ENCODE measurements at regions of chr3 and their contacts with region 1.

Region 1: GRCh38 chr3:149086232-149086988 is at the start of gene HLTF:
- DNase-seq: peak; percentile 92
- ATAC-seq: peak; percentile 99
- H3K4me3 ChIP-seq: peak within 1 kb of the TSS; percentile 71 to 81 (median 81)
- H3K27ac ChIP-seq: peak within 1 kb of the TSS; percentile 49
- H3K4me1 ChIP-seq: peaks cover 20% of the 10 kb centered on the region
- H3K27me3 ChIP-seq: no peaks in the 10 kb centered on the region; a peak in 2 of 5 replicates
- CTCF ChIP-seq: no peak
- EP300 ChIP-seq: no peak
- POLR2A ChIP-seq: peak; percentile 40 to 75; a peak in 3 of 4 replicates
- RAD21 ChIP-seq: 0 out of 2 replicates have a peak, but pooled peaks have one; percentile 16
- total RNA-seq, gene HLTF: 22.9 and 39.8 TPM in 2 replicates

Region 2: DNA sequence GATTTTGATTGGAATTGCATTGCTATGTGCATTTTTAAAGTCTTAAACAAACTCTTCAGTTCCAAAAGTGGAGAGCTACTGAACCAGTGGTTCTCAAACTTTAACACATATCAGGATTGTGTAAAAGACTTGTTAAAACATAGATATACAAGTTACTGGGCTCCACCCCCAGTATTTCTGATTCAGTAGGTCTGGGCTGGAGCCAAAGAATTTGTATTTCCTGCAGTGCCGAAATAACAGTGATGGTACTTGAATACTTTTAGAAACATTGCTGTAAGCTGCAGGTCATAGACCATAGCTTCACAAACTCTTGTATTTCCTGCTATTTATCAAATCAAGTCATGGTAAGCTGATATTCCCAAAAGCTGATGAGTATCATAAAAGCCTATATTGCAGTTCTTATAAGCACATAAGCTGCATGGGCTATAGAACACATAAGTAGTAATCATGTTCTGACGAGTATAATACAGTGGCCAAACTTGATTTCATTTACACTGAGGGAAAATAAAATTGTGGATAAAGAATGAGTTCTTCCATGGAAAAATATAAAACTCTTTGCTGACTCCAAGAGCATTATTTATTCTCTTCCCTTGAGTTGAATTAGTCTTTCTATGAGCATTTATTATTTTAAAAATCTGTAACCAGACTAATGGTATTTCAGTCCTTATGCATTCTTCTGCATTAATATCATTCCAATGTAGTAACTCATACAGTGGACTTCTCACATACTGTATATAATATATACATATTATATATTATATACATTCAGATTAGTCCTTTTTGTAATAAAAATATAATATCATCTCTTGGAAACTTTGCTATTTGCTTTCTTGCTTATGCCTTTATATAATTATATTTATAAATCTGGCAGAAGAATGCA is 939.2 kb before region 1 on chr3:
- CTCF ChIA-PET with region 1: no interaction called
- POLR2A ChIA-PET with region 1: no interaction called
- in situ Hi-C with region 1: no loop called
- intact Hi-C with region 1: loop called (anchors 5 kb)
- DNase-seq: no peak
- ATAC-seq: no peak
- H3K4me3 ChIP-seq: no peak overlapping the region
- H3K27ac ChIP-seq: no peak overlapping the region
- H3K4me1 ChIP-seq: no peaks in the 10 kb centered on the region
- H3K27me3 ChIP-seq: no peaks in the 10 kb centered on the region
- CTCF ChIP-seq: no peak
- EP300 ChIP-seq: no peak
- POLR2A ChIP-seq: no peak
- RAD21 ChIP-seq: no peak

Region 3: GRCh38 chr3:148748283-148748682 is 338.1 kb before region 1 on chr3:
- CTCF ChIA-PET with region 1: no interaction called
- POLR2A ChIA-PET with region 1: no interaction called
- in situ Hi-C with region 1: no loop called
- intact Hi-C with region 1: no loop called
- DNase-seq: no peak
- ATAC-seq: no peak
- H3K4me3 ChIP-seq: no peak overlapping the region
- H3K27ac ChIP-seq: no peak overlapping the region
- H3K4me1 ChIP-seq: no peaks in the 10 kb centered on the region
- H3K27me3 ChIP-seq: no peaks in the 10 kb centered on the region
- CTCF ChIP-seq: no peak
- EP300 ChIP-seq: no peak
- POLR2A ChIP-seq: no peak
- RAD21 ChIP-seq: no peak

Region 4: DNA sequence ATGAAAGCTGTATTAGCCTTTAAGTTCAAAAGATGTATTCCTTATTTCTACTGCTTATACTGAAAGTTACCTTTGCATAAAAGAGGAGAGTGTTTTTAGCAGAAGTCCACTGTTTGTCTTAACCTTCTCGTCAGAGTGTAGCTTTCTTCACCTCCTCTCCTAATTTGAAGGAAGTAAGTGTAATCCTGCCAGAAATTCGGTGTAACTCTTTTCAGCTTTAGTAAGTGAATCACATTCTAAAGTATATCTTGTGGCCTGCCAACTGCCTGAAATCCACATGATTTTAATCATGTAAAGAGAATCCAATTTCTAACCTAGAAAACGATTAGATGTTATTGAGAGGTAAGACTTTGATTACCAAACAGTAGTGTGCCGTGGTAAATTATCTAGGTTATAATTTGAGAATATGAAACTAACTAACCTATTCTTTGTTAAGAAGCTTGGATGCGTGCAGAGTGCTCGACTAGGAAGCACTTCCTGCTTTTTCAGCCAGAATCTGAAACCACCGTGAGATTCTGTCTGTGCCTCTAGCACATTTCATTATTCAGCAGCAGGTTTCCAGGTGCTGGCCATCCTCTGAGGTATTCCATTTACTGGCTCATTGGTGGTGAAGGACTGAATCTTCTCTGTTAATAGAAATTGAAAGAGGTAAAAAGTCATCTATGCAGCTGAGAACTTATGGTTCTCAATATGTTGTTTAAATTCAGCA is 87.5 kb before region 1 on chr3:
- CTCF ChIA-PET with region 1: no interaction called
- POLR2A ChIA-PET with region 1: no interaction called
- in situ Hi-C with region 1: no loop called
- intact Hi-C with region 1: no loop called
- DNase-seq: no peak
- ATAC-seq: no peak
- H3K4me3 ChIP-seq: no peak overlapping the region
- H3K27ac ChIP-seq: no peak overlapping the region
- H3K4me1 ChIP-seq: no peaks in the 10 kb centered on the region
- H3K27me3 ChIP-seq: no peaks in the 10 kb centered on the region
- CTCF ChIP-seq: no peak
- EP300 ChIP-seq: no peak
- POLR2A ChIP-seq: no peak
- RAD21 ChIP-seq: no peak